ENCODE measurements at regions of chr9 and their contacts with region 1.

Region 1: DNA sequence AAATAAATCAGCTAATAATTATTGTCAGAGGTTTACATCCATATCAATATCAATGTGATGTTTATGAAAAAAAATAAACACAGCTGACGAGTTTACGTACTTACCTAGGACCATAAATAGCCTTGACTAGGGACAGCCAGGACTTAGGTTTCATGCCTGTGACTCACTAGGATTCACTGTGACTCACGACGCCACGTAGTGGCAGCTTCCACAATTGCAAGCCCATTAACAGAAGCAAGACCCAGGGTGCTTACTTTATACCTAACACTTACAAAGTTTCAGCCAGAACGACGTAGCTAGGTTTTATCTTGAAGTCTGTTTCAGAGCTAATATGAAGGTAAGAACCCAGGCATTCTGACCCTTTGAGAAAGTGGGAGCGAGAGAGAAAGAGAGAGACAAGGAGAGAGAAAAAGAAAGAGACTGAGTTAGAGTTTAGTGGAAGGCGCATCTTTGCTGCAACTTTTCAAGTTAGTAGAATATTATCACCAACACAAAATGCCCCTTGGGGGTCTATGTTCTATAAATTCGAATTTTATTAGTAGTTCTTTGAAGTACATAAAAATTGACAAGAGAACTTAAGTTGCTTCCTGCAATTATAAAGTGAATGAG is 191.2 kb downstream of the GNA14 start:
- DNase-seq: peak; percentile 65
- H3K4me3 ChIP-seq: no peak overlapping the region
- H3K27me3 ChIP-seq: peaks cover 1% of the 10 kb centered on the region; the same call in 1 of the 2 replicates
- CTCF ChIP-seq: peak; percentile 92

Region 2: DNA sequence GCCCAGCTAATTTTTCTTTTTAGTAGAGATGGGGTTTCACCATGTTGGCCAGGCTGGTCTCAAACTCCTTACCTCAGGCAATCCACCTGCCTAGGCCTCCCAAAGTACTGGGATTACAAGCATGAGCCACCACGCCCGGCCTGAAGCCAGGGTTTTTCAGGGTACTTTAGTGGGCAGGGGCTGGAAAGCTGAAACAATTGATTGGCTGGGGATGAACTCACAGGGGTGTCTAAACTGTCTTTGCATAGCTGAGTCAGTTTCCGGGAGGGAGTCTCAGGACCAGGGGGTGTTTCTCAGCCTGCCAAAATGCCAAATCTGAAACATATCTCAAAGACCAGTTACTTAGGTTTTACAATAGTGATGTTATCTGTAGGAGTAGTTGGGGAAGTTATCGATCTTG is 597.1 kb before region 1 on chr9:
- CTCF ChIA-PET with region 1: no interaction called
- POLR2A ChIA-PET with region 1: no interaction called
- DNase-seq: no peak
- H3K4me3 ChIP-seq: no peak overlapping the region
- H3K27me3 ChIP-seq: no peaks in the 10 kb centered on the region
- CTCF ChIP-seq: no peak

Region 3: DNA sequence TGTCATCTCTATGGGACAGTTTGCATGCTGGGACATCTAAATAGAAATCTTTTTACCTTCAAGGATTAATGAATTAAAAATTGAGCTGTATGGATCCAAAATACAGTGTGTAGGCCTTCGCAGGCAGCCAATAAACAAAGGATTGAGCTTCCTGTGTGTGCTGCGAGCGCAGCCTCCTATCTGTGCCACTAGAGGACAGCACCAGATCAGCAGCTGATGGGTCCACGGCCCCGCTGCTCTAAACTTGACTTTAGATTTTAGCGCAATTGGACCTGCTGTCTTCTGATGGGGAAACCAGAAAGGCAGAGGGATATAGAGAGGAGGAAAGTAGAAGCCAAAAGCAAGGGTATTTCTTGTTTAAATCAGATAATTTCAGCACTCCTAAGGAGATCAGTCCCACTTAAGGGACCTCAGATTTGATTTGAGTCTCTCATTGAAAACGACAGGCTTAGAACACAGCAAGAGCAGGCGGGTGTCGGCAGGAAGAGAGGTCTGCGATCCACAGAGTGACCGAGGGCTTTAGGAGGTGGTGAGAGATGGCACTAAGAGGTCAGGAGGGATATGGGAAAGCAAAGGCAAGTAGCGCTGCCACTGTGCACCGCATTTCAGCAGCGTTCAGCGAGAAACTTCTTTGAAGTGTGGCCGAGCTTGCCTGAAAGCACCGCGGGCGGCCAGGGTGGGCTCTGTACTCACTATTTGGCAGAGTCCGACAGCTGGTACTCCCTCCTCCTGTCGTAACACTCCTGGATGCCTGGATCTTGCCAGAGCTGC is 23.1 kb before region 1 on chr9:
- CTCF ChIA-PET with region 1: interaction called, 91 read pairs
- POLR2A ChIA-PET with region 1: no interaction called
- DNase-seq: no peak
- H3K4me3 ChIP-seq: no peak overlapping the region
- H3K27me3 ChIP-seq: peaks cover 2% of the 10 kb centered on the region; the same call in 1 of the 2 replicates
- CTCF ChIP-seq: peak; percentile 100

Region 4: DNA sequence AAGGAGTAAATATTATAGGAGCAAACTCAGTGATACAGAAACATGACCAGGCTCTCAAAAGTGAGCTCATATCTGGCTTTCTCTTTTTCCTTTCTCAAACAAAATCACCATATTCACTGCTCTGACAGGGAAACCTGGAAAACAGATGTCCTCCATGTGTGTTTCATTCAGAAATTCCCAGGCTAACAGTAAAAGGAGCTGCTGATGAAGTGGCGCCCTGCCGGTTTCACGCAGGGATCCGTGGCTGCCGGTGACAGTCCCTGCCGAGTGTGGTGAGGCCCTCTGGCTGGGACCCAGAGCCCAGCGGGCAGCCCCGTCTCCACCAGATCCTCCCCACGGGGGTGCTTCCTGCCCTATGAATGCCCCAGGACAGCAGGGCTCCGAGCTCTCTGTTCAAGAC is 16.9 kb before region 1 on chr9:
- CTCF ChIA-PET with region 1: interaction called, 91 read pairs
- POLR2A ChIA-PET with region 1: no interaction called
- DNase-seq: peak; percentile 42
- H3K4me3 ChIP-seq: no peak overlapping the region
- H3K27me3 ChIP-seq: 0 out of 2 replicates have a peak, but pooled peaks cover 3% of the 10 kb centered on the region
- CTCF ChIP-seq: no peak

Region 5: GRCh38 chr9:77469515-77470231 is 12.7 kb after region 1 on chr9:
- CTCF ChIA-PET with region 1: interaction called, 42 read pairs
- POLR2A ChIA-PET with region 1: no interaction called
- DNase-seq: no peak
- H3K4me3 ChIP-seq: no peak overlapping the region
- H3K27me3 ChIP-seq: no peaks in the 10 kb centered on the region
- CTCF ChIP-seq: no peak

Region 6: DNA sequence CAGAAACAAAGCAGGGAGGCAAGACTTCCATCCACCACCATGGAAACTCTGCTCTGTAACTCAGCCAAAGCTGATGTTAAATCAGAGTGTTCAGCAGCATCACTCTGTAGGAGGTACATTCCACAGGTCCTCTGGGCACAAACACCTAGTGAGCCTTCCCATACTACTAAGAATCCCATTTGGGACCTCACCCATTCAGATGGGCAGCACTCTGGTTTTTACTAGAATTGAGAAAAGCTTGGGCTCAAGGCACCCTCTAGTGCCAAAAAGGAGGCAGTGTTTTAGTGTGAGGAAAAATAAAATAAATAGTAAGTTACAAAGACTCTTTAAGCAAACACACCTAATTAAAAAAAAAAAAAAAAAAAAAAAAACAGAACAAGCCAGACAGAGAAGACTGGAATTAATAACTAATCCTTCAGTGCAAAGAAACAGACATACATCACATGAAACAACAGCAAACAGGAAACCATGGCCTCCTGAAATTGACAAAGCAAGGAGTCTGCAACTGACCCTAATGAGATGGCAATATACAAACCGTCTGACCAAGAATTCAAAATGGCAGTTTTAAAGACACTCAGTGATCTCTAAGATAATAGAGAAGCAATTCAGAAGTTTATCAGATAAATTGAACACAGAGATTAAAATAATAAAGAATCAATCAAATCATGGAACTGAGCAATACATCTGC is 31.6 kb after region 1 on chr9:
- CTCF ChIA-PET with region 1: interaction called, 53 read pairs
- POLR2A ChIA-PET with region 1: no interaction called
- DNase-seq: no peak
- H3K4me3 ChIP-seq: no peak overlapping the region
- H3K27me3 ChIP-seq: no peaks in the 10 kb centered on the region
- CTCF ChIP-seq: peak; percentile 64

Region 7: DNA sequence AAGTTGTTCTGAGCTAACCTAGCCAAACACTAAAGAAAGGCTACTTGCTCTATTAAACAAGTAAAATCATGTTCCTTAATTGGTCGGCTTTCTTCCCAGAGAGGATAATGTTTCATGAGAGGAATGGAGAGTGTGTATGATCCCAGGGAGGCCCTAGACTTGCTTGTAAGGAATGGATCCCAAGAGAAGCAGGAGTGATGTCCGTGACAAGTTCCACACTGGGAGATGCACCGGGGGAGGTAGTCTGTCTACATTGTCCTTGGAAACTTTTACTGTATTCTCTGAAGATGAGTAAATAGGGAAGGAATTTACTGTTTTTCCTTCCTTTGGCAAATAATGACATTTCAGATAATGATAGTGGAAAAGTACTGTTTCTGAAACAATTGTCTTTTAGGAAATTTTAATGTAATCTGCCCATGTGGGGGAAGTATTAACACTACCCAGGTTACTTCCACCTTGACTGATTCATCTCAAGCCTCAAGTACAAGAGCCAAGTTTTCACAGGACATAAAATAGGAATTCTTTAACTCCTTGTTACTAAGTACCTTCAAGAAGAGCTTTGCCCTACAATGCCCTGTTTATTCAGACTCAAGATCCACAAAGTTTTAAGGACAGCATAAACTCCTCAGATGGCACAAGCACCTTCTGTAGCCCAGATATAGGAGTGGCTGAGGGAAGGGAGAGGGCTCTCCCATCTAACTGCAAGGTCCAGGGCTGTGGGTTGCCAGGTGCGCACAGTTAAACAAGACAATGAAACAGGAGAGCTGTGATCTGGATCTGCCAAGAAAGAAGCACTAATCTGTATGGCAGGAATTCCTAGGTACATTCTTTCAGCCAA is 39.1 kb after region 1 on chr9:
- CTCF ChIA-PET with region 1: interaction called, 17 read pairs
- POLR2A ChIA-PET with region 1: no interaction called
- DNase-seq: peak; percentile 88
- H3K4me3 ChIP-seq: no peak overlapping the region
- H3K27me3 ChIP-seq: no peaks in the 10 kb centered on the region
- CTCF ChIP-seq: no peak

Region 8: GRCh38 chr9:77751341-77752091 is 294.6 kb after region 1 on chr9:
- CTCF ChIA-PET with region 1: interaction called, 29 read pairs
- POLR2A ChIA-PET with region 1: no interaction called
- DNase-seq: peak; percentile 80
- H3K4me3 ChIP-seq: no peak overlapping the region
- H3K27me3 ChIP-seq: no peaks in the 10 kb centered on the region
- CTCF ChIP-seq: peak; percentile 49

Measured in BJ (cell line).